Heart right ventricle (tissue), 16 donors: ENCODE measurements at regions of chr14 and their contacts with region 1.

Region 1: DNA sequence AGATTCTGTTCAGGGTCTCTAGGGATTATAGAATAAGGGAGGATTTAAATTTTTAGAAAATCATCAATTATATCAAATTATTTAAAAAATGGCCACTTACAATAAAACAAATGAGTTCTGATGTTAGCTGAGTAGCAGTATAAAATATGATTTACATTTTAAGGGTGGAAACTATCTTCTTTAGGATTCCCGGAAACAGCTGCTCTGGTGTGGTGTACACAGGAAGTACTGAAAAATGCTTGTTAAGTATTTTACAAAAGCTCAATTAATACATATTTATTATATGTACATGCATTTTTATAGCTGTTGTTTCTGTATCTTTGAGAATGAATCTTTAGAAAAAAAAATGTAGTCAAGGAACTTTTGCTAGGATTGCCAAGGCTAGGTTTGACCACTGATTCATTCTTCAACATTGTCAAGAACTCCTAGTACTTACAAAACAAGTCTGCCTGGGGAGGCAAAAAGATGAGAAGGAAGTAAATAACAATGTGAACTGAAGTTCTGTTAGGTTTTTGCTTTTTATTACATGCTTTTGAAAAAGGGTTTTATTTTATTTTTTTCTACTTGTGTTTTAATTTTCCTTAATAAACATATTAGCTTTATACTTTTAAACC is 48.0 kb downstream of the ARF6 start:
- DNase-seq: no peak
- ATAC-seq: no peak
- H3K4me3 ChIP-seq: no peak overlapping the region
- H3K27ac ChIP-seq: peak overlapping the region in 3 of 10 donors; percentile 2 to 78 (median 14)
- H3K4me1 ChIP-seq: peaks cover 0 to 29% (median 12%) of the 10 kb centered on the region in 9 donors
- H3K27me3 ChIP-seq: no peaks in the 10 kb centered on the region
- CTCF ChIP-seq: no peak

Region 2: GRCh38 chr14:49920935-49921334 is 20.0 kb before region 1 on chr14:
- intact Hi-C with region 1: loop called in 1 of 10 experiments (anchors 2 kb)
- DNase-seq: no peak
- ATAC-seq: no peak
- H3K4me3 ChIP-seq: no peak overlapping the region
- H3K27ac ChIP-seq: no peak overlapping the region
- H3K4me1 ChIP-seq: peaks cover 0 to 15% (median 0%) of the 10 kb centered on the region in 9 donors
- H3K27me3 ChIP-seq: no peaks in the 10 kb centered on the region
- CTCF ChIP-seq: no peak